Vagina (tissue), 2 donors: ENCODE measurements at regions of chr11 and their contacts with region 1.

Region 1: GRCh38 chr11:63762654-63763495 is 5.7 kb downstream of the ZFTA start:
- DNase-seq: no peak
- H3K4me3 ChIP-seq: peak overlapping the region; percentile 45 to 49
- H3K27ac ChIP-seq: peak overlapping the region; percentile 75
- H3K4me1 ChIP-seq: peaks cover 43% of the 10 kb centered on the region
- H3K27me3 ChIP-seq: no peaks in the 10 kb centered on the region
- CTCF ChIP-seq: no peak
- POLR2A ChIP-seq: no peak

Region 2: GRCh38 chr11:63621931-63622782 is 140.7 kb before region 1 on chr11:
- intact Hi-C with region 1: no loop called
- DNase-seq: no peak
- H3K4me3 ChIP-seq: no peak overlapping the region
- H3K27ac ChIP-seq: no peak overlapping the region
- H3K4me1 ChIP-seq: no peaks in the 10 kb centered on the region
- H3K27me3 ChIP-seq: no peaks in the 10 kb centered on the region
- CTCF ChIP-seq: no peak
- POLR2A ChIP-seq: no peak

Region 3: GRCh38 chr11:63729326-63729725 is 33.5 kb before region 1 on chr11:
- intact Hi-C with region 1: no loop called
- DNase-seq: no peak
- H3K4me3 ChIP-seq: no peak overlapping the region
- H3K27ac ChIP-seq: no peak overlapping the region
- H3K4me1 ChIP-seq: no peaks in the 10 kb centered on the region
- H3K27me3 ChIP-seq: no peaks in the 10 kb centered on the region
- CTCF ChIP-seq: no peak
- POLR2A ChIP-seq: no peak

Region 4: DNA sequence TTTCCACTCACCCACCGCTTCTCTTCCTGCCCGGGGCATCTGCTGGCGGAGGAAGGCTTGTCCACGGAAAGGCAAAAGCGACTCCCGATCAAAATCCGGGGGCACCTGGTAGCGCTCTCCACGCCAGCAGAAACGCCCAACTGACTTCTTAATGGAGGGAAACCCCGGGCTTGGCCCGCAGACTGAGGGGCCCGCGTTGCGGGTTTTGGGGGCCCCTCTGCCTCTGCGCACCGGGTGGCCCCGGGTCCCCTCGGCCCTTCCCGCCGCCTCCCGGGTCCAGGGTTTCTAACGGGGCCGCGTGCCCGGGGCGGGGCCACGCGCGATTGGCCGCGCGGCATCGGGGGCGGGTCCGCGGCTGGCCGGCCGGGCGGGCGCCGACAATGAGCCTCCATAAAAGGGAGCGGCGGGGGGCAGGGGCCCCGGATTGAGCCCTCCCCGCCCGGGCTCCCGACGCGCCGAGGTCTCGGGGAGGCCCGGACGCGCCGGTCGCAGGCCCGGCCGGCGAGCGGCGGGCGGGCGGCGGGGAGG is 50.2 kb after region 1 on chr11 and contains the start of gene SPINDOC:
- intact Hi-C with region 1: loop called (anchors 1 kb)
- DNase-seq: no peak
- H3K4me3 ChIP-seq: peak within 1 kb of the TSS; percentile 74 to 91
- H3K27ac ChIP-seq: peak within 1 kb of the TSS; percentile 79
- H3K4me1 ChIP-seq: peaks cover 34% of the 10 kb centered on the region
- H3K27me3 ChIP-seq: no peaks in the 10 kb centered on the region
- CTCF ChIP-seq: no peak
- POLR2A ChIP-seq: peak in 1 of 2 donors; percentile 48
- total RNA-seq, gene SPINDOC: 6.6 TPM